Endothelial cell of umbilical vein (primary cell): ENCODE measurements at regions of chr6 and their contacts with region 1.

Region 1: GRCh38 chr6:143759666-143760065 is 81.9 kb downstream of the PHACTR2 start:
- DNase-seq: peak; percentile 36
- H3K4me3 ChIP-seq: no peak overlapping the region
- H3K27ac ChIP-seq: peak overlapping the region; percentile 32
- H3K4me1 ChIP-seq: peaks cover 33% of the 10 kb centered on the region
- H3K27me3 ChIP-seq: no peaks in the 10 kb centered on the region
- CTCF ChIP-seq: no peak
- POLR2A ChIP-seq: no peak

Region 2: DNA sequence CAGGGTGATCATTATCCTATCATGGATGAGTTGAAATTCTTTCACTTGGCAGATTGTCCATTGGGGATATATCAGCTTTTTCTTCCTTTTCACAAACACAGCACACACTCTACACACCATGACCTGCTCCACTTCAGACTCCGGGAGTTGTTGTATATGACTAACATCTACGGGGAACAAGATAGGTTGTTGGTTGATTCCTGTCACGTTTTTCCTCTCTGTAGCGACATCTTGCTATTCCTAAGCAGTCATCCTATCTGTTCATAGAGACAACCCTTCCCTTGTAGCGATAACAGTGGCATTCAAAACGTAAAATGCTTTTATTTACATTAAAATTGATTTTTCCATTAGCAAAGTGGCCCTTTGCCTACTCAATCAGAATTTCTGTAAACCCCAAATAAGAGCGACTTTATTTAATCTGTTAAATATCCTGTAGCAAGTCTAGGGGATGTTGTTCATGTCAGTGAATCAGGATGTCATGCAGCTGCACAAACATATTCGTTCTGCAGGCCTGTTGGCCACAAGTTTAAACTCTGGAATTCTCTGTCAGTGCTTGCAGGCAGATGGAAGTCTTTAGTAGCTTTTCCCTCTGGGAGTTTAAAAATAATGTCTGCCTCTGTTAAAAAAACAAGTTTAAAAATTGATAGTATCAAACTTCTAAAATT is 58.9 kb before region 1 on chr6:
- CTCF ChIA-PET with region 1: no interaction called
- POLR2A ChIA-PET with region 1: no interaction called
- dilution Hi-C with region 1: no loop called
- intact Hi-C with region 1: loop called (anchors 2 kb)
- DNase-seq: peak; percentile 83
- H3K4me3 ChIP-seq: no peak overlapping the region
- H3K27ac ChIP-seq: peak overlapping the region; percentile 46
- H3K4me1 ChIP-seq: peaks cover 51% of the 10 kb centered on the region
- H3K27me3 ChIP-seq: no peaks in the 10 kb centered on the region
- CTCF ChIP-seq: no peak
- POLR2A ChIP-seq: no peak

Region 3: DNA sequence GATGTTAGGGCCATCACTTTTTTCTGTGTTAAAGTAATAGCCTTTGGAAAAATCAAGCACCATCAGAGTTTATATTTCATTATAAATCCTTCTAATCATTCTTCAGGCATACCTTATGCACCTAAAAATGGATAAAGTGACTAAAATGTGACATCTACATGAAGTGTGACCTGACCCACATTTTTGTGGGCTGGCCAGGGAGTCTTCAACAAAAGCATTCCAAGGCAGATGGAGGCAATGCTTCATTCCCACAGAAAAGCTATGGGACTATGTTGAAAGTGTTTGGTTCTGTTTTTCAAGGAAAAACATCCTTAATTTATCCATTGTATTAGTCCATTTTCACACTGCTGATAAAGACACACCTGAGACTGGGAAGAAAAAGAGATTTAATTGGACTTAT is 24.6 kb after region 1 on chr6:
- CTCF ChIA-PET with region 1: no interaction called
- POLR2A ChIA-PET with region 1: no interaction called
- dilution Hi-C with region 1: no loop called
- intact Hi-C with region 1: no loop called
- DNase-seq: no peak
- H3K4me3 ChIP-seq: no peak overlapping the region
- H3K27ac ChIP-seq: no peak overlapping the region
- H3K4me1 ChIP-seq: no peaks in the 10 kb centered on the region
- H3K27me3 ChIP-seq: no peaks in the 10 kb centered on the region
- CTCF ChIP-seq: no peak
- POLR2A ChIP-seq: no peak